BJ (cell line): ENCODE measurements at regions of chr5 and their contacts with region 1.

Region 1: DNA sequence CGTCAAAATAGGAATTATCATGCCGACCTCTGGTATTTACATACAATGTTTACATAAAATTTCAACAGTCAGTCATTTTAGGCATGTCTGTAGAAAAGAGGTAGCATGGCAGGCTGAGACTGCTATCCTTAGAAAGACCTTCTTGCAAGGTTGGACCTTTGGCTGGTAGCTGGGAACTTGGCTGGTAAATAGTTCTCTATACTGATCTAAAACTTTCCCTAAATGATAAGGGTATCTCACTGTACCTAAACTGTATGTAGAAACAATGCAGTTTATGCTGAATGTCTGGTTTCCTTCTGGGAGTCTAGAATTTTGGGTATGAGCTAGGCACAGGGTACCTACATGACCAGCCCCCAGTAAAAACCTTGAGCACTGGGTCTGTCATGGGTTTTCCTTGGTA is 18.0 kb downstream of the FEM1C start:
- DNase-seq: no peak
- H3K4me3 ChIP-seq: no peak overlapping the region
- H3K27me3 ChIP-seq: no peaks in the 10 kb centered on the region
- CTCF ChIP-seq: no peak

Region 2: DNA sequence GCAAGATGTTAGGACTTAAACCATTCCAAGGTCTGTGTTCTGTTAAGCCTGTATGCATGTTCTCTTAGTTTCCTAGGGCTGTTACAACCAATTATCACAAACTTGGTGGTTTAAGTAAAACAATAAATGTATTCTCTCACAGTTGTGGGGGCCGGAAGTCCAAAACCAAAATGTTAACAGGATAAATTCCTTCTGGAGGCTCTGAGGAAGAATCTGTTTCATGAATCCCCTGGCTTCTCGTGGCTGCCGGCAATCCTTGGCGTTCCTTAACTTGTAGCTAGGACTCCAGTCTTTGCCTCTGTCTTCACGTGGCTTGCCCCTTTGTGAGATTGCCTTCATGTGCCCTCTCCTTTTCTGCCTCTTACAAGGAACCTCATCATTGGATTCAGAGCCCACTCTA is 12.4 kb before region 1 on chr5:
- CTCF ChIA-PET with region 1: interaction called, 15 read pairs
- POLR2A ChIA-PET with region 1: no interaction called
- DNase-seq: no peak
- H3K4me3 ChIP-seq: no peak overlapping the region
- H3K27me3 ChIP-seq: no peaks in the 10 kb centered on the region
- CTCF ChIP-seq: no peak

Region 3: GRCh38 chr5:115850744-115851416 is 324.3 kb after region 1 on chr5:
- CTCF ChIA-PET with region 1: no interaction called
- POLR2A ChIA-PET with region 1: no interaction called
- DNase-seq: no peak
- H3K4me3 ChIP-seq: no peak overlapping the region
- H3K27me3 ChIP-seq: no peaks in the 10 kb centered on the region
- CTCF ChIP-seq: no peak